Cardiac septum (tissue), 1 donor: ENCODE measurements at regions of chr17 and their contacts with region 1.

Region 1: GRCh38 chr17:17812211-17813057 is 24.4 kb downstream of the SREBF1 start:
- DNase-seq: peak; percentile 90

Region 2: DNA sequence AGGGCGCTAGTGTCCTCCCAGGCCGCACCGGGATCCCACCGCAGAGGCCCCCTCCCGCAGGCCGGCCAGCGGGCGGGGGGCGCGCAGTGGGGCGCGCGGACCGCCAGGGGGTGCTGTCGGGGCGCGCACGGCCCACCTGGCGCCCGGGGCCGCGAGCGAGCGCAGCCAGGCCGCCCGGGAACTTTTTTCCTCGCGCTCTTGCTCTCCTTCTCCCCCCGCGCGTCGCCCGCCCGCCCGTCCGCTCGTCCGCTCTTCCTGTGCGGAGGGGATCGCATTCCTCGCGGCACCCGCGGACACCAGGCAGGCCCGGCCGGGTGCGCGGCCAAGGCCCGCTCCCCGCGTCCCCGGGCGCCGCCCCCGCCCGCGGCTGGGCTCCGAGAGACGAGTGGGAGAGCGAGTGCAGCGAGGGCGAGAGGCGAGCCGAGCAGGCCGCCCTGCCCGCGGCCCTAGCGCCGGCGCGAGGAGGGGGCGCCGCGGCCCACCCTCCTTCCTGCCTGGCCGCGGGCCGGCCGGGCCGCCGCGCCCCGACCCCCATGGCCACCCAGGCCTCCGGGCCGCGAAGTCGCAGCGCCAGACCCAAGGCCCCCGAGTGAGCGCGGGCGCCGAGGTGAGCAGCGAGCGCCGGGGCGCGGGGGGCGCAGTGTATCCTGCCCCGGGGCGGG is 131.1 kb before region 1 on chr17 and contains the start of gene RAI1:
- intact Hi-C with region 1: loop called (anchors 2 kb)
- DNase-seq: peak; percentile 86
- total RNA-seq, gene RAI1: 28.8 TPM

Region 3: DNA sequence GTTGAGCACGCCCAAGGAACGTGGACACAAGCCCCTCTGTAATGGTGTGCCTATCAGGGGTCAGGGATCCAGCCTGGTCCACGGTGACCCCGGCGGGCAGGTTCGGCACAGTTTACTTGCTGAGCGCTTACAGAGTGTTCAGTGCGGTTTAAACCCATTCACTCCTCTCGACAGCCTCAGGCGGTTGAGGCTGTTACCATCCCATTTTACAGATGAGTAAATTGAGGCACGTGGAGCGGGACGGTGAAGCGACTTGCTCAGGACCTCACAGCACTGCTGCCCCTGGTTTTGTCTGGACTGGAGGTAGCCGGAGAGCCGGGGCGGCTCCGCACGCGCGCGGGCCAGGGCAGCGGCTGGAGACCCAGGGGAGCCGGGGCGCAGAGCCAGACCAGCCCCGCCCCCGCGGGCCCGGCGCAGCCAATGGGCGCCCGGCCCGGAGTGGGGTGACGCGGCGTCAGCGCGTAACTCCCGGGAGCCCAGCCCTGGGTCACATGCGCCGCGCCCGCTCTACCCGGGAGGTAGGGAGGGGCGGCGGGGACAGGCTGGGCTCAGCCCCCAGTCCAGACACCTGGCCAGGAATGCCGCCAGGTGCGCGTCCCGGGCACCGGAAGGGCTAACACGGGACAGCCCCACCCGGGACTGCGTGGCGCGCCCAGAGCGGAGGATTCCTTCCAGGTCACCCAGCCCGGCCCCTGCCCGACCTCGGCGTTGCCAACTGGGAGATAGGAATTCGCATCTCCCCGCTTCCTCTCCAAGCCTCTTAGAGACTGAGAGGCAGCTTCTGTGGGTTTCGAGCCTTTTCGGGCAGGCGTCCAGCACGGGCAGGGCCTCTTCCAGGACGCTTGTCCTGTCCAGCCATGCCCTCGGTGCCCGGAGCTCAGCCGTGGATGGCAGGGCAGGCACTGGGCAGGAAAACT is 27.6 kb after region 1 on chr17:
- intact Hi-C with region 1: loop called (anchors 2 kb)
- DNase-seq: peak; percentile 94

Region 4: GRCh38 chr17:17859909-17860765 is 47.7 kb after region 1 on chr17:
- intact Hi-C with region 1: loop called (anchors 2 kb)
- DNase-seq: peak; percentile 90

Region 5: DNA sequence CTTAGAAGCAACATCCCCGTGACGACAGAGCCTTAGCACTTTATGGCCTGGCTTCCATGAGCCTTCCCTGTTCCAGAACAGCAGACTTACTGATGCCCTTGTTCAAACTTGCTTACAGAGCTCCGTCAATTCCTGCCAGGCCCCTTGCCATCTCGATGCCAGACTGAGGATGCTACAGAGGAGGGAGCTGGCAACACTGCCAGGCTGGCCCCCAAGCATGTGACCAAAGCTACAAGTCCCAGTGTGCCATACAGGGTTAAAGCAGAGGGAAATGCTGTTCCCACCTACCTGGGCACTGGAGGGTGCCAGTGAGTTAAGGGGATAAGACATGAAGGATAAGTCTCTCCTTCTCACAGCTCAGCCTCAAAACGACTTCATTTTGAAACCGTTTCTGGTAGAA is 57.8 kb after region 1 on chr17:
- intact Hi-C with region 1: no loop called
- DNase-seq: no peak

Region 6: GRCh38 chr17:17919169-17920107 is 107.0 kb after region 1 on chr17:
- intact Hi-C with region 1: loop called (anchors 2 kb)
- DNase-seq: peak; percentile 80

Region 7: DNA sequence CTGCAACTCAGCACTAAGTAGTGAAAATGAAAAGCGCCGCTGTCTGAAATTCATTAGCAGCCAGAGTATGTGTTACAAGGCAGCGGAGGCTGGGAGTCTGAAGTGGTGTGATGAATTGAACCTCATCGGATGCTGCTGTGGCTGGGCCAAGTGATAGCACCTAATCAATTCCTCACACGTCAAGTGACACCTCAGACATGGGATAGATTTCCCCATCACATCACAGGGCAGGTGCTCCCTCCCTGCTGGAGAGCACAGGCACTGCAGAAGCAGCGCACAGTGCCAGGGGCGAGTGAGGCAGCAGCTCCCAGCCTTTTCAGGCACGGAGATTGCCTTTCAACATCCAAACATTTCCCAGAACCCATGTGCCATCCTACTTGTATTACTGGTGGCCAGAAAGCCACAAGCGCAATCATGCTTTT is 192.5 kb after region 1 on chr17:
- intact Hi-C with region 1: no loop called
- DNase-seq: no peak

Region 8: GRCh38 chr17:18033442-18034099 is 221.1 kb after region 1 on chr17:
- intact Hi-C with region 1: loop called (anchors 5 kb)
- DNase-seq: no peak